RWPE1 (cell line): ENCODE measurements at regions of chr10 and their contacts with region 1.

Region 1: DNA sequence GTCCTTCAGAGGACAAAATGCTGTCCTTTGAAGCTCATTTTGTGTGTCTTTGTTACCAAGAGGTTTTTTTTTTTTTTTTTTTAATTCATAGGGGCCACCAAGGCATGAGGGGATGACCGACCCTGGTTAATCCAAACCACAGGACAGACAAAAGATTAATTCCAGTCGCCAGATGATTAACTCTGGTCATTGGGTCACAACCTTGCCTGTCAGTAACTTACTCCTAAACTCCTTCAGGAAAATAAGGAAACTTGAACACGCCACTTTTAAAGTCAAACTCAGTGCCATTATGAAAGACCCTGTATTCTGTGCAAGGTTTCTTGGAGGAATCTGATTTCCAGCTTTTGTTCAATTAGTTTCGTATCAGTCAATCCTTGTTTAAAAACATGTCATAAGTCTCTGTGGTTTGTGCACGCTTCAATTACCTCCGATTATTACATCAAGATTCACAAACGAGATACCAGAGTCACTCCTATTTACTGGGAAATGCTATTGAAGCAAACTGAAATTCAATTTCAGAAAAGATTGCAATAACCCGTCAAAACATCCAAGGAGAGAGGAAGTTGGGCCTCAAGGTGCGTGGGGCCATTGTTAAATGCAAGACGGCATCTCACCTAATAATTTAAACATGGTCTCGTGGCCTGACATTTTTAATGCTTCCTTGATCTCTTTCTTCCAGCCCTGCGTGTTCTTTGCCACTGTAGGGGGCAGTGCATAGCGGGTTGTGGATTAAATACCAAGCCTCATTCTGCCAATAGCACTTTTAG is 44.0 kb downstream of the NRP1 start:
- DNase-seq: no peak
- H3K27ac ChIP-seq: no peak overlapping the region
- CTCF ChIP-seq: no peak

Region 2: DNA sequence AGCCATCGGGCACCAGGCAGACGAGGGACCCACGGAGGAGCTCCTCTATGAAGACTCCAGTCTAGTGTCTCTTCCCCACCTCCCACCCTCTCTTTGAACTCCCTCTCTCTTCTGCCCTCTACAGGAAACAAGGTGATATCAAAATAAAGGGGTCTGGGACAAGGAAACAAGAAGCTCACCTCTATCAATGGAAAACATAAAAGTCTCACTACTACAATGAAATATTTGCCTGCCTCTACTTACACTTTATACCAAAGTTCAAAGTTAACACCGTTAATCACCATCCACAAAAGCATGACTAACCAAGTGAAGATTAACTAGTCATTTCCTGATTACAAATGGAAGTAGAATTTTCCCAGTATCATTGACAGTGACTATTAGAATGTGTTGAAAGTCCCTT is 1442.5 kb after region 1 on chr10:
- CTCF ChIA-PET with region 1: interaction called, 14 read pairs
- POLR2A ChIA-PET with region 1: no interaction called
- DNase-seq: peak; percentile 46
- H3K27ac ChIP-seq: peak overlapping the region; percentile 96
- CTCF ChIP-seq: no peak